HEK293 (cell line): ENCODE measurements at regions of chr11 and their contacts with region 1.

Region 1: DNA sequence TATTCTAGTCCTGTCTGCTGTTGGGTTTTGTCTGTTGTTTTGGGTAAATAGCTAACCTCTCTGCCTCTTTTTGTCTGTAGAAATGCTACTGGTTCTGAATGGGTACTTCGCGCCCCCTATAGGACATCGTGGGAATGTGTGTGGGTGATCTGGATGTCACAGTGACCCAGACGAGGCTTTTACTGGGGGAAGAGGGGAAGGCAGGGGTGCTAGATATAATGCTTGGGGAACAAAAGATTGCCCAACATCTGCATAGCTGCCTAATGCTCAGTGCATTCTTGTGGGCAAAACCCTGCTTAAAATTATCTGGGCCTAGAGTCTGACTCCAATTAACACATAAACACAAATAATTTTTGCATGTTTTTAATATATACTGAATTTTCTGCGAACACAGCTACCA is 57.7 kb downstream of the BMAL1 start:
- H3K4me3 ChIP-seq: no peak overlapping the region
- H3K27ac ChIP-seq: no peak overlapping the region
- H3K4me1 ChIP-seq: no peaks in the 10 kb centered on the region
- CTCF ChIP-seq: no peak

Region 2: DNA sequence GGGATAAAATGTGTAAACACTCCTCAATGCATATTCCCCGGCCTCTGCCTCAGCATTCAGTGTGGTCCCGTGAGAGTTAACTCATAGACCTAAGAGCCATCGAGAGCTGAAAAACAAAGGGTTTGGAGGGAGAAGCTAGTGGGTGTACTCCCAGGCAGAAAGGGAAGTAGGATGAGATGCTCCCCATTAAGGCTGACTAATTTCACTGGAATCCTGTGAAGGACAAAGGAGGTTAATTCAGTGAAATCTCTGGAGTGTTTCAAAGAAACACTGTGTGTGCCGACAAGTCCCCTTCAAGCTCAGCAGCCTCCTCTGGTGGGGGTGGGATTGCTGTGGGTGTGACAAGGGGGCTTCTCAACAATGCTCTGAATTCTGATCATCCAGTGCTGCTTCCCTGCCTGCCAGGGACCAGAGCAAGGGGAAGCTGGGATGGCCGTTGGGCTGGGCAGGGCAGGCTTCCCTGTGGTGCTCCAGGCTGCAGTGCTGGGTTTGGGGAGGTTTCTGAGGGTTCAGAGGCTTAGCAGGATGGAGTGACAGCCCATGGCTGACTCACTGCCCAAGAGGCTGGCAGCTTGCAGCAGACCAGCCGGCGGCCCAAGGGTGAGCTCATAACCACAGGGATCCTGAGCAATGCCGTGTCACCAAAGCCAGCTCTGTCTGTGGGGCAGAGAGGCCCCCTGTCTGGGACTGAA is 119.2 kb before region 1 on chr11:
- CTCF ChIA-PET with region 1: interaction called, 114 read pairs
- POLR2A ChIA-PET with region 1: no interaction called
- H3K4me3 ChIP-seq: peak overlapping the region; percentile 14
- H3K27ac ChIP-seq: no peak overlapping the region
- H3K4me1 ChIP-seq: no peaks in the 10 kb centered on the region
- CTCF ChIP-seq: no peak

Region 3: GRCh38 chr11:13318498-13319295 is 16.6 kb before region 1 on chr11:
- CTCF ChIA-PET with region 1: interaction called, 20 read pairs
- POLR2A ChIA-PET with region 1: no interaction called
- H3K4me3 ChIP-seq: no peak overlapping the region
- H3K27ac ChIP-seq: no peak overlapping the region
- H3K4me1 ChIP-seq: no peaks in the 10 kb centered on the region
- CTCF ChIP-seq: no peak